ENCODE measurements at regions of chr20 and their contacts with region 1.

Region 1: DNA sequence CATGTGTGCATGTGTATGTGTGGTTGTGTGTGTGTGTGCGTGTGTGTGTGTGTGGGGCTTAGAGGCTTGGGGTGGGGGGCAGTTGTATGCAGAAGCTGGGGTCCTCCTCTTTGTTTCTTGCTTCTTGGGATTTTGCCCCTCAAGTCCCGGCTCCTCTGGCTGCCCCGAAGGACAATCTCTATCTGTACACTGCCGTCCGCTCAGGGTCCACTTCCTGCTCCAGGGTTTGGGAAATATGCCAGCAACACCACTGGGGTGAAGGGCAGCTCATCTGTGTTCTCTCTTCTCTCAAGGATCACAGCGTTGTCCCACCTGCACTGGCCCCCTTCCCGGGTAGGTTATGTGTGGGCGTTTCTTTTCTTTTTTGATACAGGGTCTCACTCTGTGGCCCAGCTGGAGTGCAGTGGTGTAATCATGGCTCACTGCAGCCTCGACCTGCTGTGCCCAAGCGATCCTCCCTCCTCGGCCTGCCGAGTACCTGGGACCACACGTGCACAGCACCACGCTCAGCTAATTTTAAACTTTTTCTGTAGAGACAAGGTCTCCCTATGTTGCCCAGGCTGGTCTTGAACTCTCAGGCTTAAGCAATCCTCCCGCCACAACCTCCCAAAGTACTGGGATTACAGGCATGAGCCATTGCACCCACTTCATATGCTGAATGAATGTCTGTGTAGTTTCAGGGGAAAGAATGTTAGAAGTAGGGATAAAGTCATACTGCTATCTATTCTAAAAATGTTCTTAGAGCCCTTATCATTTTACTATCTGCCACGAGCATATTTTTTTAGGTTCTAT is 25.7 kb downstream of the SLC2A4RG start:
- DNase-seq: no peak
- H3K4me3 ChIP-seq: no peak overlapping the region
- H3K4me3 Mint-ChIP-seq: no peak overlapping the region
- H3K27ac ChIP-seq: no peak overlapping the region
- H3K27ac Mint-ChIP-seq: no peak overlapping the region
- H3K4me1 ChIP-seq: no peaks in the 10 kb centered on the region
- H3K4me1 Mint-ChIP-seq: no peaks in the 10 kb centered on the region
- H3K27me3 ChIP-seq: no peaks in the 10 kb centered on the region
- H3K27me3 Mint-ChIP-seq: no peaks in the 10 kb centered on the region

Region 2: DNA sequence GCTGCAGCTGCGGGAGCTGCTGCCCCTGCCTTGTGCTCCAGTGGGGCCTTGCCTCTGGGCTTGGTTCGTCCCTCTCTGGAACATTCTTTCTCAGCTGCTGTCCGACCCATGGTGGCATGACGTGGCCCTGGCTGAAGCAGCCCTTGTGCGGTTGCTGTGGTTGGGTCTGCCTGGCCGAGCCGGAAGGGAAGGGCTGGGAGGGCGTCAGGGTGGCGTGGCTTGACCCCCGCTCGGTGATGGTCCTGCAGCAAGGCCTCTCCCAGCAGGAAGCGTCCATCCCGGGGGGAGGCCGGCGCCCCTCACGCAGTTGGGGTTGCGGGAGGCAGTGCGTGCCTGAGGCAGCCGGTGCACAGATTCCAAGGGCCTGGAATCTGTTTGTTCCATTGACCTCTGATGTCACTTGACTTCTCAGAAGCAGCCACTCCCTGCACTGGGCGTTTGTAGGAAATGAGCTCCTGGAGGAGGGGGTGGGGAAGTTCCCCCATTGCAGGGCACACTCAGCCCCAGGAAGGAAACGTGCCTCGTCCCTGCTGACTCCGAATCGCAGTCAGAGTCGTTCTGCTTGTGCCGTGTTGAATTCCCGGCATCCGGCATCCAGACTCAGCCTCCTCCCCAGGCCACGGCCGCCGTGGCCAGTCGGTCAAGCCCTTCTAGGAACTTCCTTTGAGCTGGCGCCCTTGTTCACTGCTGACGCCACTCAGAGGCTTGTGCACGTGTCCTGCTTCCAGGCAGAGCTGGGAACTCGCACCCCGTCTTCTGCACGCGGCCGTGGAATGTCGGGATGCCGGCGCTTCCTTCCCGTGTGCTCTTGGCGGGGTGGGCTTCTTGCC is 78.6 kb before region 1 on chr20:
- CTCF ChIA-PET with region 1: no interaction called
- POLR2A ChIA-PET with region 1: no interaction called
- intact Hi-C with region 1: no loop called
- DNase-seq: peak in 1 of 5 donors; percentile 15
- H3K4me3 ChIP-seq: no peak overlapping the region
- H3K4me3 Mint-ChIP-seq: no peak overlapping the region
- H3K27ac ChIP-seq: no peak overlapping the region
- H3K27ac Mint-ChIP-seq: no peak overlapping the region
- H3K4me1 ChIP-seq: peaks cover 16% of the 10 kb centered on the region
- H3K4me1 Mint-ChIP-seq: peaks cover 1 to 10% (median 5%) of the 10 kb centered on the region in 4 donors
- H3K27me3 ChIP-seq: no peaks in the 10 kb centered on the region
- H3K27me3 Mint-ChIP-seq: no peaks in the 10 kb centered on the region

Region 3: DNA sequence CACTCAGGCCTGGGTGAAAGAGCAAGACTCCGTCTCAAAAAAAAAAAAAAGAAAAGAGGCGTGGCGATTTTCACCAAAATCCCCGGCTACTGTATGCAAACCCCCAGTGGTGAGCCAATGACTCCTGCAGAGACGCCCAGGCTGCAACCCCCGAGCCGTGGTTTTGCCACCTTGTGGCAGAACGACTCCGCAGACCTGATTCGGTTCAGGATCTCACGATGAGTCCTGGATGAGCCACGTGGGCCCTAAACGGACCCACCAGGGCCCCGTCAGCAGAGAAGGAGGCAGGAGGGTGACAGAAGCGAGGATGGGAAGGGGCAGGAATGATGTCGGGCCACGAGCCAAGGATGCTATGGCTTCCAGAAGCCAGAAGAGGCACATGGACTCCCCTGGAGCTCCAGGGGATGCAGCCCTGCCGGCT is 16.8 kb after region 1 on chr20:
- CTCF ChIA-PET with region 1: interaction called, 10 read pairs
- POLR2A ChIA-PET with region 1: interaction called, 5 read pairs
- intact Hi-C with region 1: no loop called
- DNase-seq: peak; percentile 65 to 83 (median 73)
- H3K4me3 ChIP-seq: no peak overlapping the region
- H3K4me3 Mint-ChIP-seq: peak overlapping the region in 6 of 8 donors; percentile 55 to 80 (median 70)
- H3K27ac ChIP-seq: no peak overlapping the region
- H3K27ac Mint-ChIP-seq: peak overlapping the region; percentile 17 to 90 (median 82)
- H3K4me1 ChIP-seq: peaks cover 14% of the 10 kb centered on the region
- H3K4me1 Mint-ChIP-seq: peaks cover 16 to 27% (median 17%) of the 10 kb centered on the region in 4 donors
- H3K27me3 ChIP-seq: no peaks in the 10 kb centered on the region
- H3K27me3 Mint-ChIP-seq: no peaks in the 10 kb centered on the region

Region 4: DNA sequence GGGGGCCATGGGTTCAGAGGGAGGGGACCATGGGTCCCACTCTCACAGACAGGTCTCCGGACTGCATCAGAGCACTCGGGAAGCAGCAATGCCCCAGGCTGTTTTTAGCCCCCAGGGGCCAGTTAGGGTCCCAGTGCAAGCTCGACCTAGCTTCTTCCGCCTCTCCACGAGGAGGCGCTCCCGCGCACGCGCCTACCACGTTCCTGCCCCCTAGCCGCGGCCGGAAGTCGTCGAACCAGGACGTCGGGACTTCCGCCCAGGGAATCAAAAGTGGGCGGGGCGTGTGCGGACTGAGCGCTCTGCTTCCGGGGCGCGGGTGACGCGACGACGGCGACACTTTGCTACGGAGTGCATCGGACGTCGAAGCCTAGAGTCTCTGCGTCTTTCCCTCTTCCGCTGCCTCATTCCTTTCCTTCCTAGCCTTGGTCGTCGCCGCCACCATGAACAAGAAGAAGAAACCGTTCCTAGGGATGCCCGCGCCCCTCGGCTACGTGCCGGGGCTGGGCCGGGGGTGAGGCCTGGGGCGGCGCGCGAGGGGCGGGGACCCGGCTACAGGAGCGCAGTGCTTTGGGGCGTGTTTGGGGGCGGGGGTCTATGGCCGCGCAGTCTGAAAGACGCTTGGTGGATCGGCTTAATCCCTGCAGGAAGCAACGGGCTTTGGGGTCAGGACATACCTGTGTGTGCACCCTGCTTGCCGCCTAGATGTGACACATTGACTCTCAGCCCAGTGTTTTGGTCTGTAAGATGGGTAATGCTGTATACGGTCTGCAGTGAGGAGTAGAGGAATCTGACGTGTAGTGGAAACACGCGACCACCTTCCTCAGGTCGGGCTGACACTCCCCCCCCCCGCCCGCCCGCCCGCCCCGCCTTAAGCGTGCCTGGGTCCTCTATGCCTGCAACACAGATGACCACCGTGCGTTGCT is 215.8 kb after region 1 on chr20 and contains the start of gene PRPF6:
- CTCF ChIA-PET with region 1: no interaction called
- POLR2A ChIA-PET with region 1: no interaction called
- intact Hi-C with region 1: no loop called
- DNase-seq: peak; percentile 91 to 94 (median 94)
- H3K4me3 ChIP-seq: peak within 1 kb of the TSS; percentile 42 to 67
- H3K4me3 Mint-ChIP-seq: peak within 1 kb of the TSS; percentile 90 to 99 (median 93)
- H3K27ac ChIP-seq: peak within 1 kb of the TSS; percentile 69
- H3K27ac Mint-ChIP-seq: peak within 1 kb of the TSS; percentile 95 to 99 (median 98)
- H3K4me1 ChIP-seq: peaks cover 54% of the 10 kb centered on the region
- H3K4me1 Mint-ChIP-seq: peaks cover 48 to 72% (median 60%) of the 10 kb centered on the region in 4 donors
- H3K27me3 ChIP-seq: no peaks in the 10 kb centered on the region
- H3K27me3 Mint-ChIP-seq: no peaks in the 10 kb centered on the region
- total RNA-seq, gene PRPF6: 86.4 to 88.7 TPM

Measured in CD4-positive, alpha-beta memory T cell (primary cell).